Activated CD4-positive, alpha-beta memory T cell treated with anti-CD3 and anti-CD28 coated beads, Interleukin-2, amount 10 ng/mL, durations not matched to agents 7 days and 5 days (primary cell): ENCODE measurements at regions of chr11 and their contacts with region 1.

Region 1: GRCh38 chr11:123407130-123407995 is 22.7 kb upstream of the GRAMD1B start:
- DNase-seq: peak; percentile 73
- H3K4me3 Mint-ChIP-seq: peak overlapping the region; percentile 70
- H3K27ac Mint-ChIP-seq: no peak overlapping the region
- H3K4me1 Mint-ChIP-seq: peaks cover 45% of the 10 kb centered on the region
- H3K27me3 Mint-ChIP-seq: no peaks in the 10 kb centered on the region

Region 2: DNA sequence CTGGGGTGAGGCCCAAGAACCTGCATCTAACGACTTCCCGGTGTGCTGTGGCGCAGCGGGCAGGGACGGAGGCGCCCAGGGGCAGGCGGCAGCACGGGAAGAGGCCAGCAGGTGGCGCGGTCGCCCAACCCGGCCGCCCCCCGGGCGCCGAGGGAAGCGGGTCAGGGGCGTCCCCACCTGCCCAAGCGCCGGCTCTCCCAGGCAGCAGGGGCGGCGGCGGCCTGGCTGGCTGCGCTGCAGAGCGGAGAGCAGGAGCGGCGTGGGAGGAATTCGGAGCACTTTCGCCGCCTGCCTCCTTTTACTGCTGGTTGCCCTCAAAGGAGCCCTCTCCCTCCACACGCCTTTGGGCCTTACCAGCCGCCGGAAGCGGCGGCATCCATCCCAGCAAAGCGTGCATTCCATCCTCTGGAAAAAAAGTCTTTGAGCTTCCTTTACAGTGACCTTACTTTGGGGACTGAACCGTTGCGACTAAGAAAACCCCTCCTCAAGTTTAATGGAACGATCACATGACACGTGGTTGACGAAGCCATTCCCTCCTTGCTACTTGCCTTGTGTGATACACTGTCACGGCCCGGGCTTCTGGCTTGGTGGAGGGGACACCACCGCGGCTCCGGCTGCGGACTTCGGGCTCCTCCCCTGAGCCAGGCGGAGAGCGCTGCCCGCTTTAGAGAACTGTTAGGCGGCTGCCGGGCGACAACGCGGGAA is 105.5 kb before region 1 on chr11:
- CTCF ChIA-PET with region 1: interaction called, 42 read pairs
- POLR2A ChIA-PET with region 1: interaction called, 3 read pairs
- DNase-seq: peak; percentile 78
- H3K4me3 Mint-ChIP-seq: peak overlapping the region; percentile 56
- H3K27ac Mint-ChIP-seq: peak overlapping the region; percentile 59
- H3K4me1 Mint-ChIP-seq: peaks cover 47% of the 10 kb centered on the region
- H3K27me3 Mint-ChIP-seq: peaks cover 3% of the 10 kb centered on the region

Region 3: DNA sequence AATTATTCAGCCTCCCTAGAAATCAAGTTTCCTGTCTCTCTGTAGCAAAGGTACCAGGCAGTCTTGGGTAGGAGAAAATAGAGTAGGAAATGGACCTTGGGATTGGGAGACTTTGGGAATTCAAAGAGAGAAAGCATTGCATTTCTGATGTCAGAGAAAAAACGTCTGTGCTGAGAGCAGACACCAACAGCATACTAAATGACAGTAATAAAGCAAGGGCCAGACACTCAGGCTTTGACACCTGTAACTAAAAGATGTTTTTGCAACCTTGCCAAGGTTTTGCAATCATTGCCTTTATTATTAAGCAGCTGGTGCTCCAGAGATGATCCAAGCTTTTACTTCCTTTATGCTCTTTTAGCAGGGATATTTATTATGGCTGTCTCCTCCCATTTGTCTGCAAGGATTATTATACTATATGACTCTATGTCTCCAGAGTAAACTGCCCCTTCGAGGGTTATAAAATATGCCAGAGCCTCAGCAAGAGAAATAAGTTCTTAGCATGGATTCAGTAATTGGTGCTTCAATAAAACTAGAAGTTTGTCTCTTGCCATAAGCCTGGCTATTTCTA is 62.5 kb before region 1 on chr11:
- CTCF ChIA-PET with region 1: no interaction called
- POLR2A ChIA-PET with region 1: no interaction called
- DNase-seq: no peak
- H3K4me3 Mint-ChIP-seq: no peak overlapping the region
- H3K27ac Mint-ChIP-seq: no peak overlapping the region
- H3K4me1 Mint-ChIP-seq: no peaks in the 10 kb centered on the region
- H3K27me3 Mint-ChIP-seq: peaks cover 7% of the 10 kb centered on the region

Region 4: DNA sequence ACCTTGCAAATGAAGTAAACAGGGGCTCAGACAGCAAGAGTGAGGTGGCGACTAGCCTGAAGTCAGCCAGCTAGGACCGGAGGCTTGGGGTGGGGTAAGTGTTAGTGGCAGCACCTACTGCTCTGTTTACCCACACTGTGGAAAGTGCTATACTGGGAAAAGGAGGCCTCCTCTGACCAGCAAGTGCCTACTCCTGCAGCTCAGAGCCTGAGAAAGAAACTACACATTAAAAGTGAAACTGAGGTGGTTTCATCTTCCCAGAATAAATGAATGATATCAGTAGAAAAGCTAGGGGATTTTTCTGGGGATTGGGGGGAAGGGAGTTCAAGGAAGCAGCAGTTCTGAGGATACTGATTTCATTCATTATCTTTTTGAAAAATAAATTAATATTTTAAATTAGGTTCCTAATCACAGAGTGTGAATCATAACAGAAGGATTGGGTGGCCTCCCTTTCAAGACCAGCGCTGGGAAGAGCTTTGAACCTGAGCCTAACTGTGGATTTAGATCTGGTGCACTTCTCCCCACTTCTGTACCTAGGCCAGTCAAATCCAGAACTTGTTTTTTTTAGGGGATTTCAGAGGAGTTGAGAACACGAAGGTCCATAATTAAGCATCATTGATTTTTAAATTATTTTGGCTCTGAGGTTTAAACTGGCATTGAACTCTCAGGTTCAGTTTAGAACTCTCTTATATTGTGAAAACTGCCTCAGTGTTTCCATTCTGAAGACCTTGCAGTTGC is 25.4 kb before region 1 on chr11:
- CTCF ChIA-PET with region 1: interaction called, 21 read pairs
- POLR2A ChIA-PET with region 1: interaction called, 18 read pairs
- DNase-seq: peak; percentile 78
- H3K4me3 Mint-ChIP-seq: peak overlapping the region; percentile 49
- H3K27ac Mint-ChIP-seq: no peak overlapping the region
- H3K4me1 Mint-ChIP-seq: peaks cover 43% of the 10 kb centered on the region
- H3K27me3 Mint-ChIP-seq: no peaks in the 10 kb centered on the region

Region 5: DNA sequence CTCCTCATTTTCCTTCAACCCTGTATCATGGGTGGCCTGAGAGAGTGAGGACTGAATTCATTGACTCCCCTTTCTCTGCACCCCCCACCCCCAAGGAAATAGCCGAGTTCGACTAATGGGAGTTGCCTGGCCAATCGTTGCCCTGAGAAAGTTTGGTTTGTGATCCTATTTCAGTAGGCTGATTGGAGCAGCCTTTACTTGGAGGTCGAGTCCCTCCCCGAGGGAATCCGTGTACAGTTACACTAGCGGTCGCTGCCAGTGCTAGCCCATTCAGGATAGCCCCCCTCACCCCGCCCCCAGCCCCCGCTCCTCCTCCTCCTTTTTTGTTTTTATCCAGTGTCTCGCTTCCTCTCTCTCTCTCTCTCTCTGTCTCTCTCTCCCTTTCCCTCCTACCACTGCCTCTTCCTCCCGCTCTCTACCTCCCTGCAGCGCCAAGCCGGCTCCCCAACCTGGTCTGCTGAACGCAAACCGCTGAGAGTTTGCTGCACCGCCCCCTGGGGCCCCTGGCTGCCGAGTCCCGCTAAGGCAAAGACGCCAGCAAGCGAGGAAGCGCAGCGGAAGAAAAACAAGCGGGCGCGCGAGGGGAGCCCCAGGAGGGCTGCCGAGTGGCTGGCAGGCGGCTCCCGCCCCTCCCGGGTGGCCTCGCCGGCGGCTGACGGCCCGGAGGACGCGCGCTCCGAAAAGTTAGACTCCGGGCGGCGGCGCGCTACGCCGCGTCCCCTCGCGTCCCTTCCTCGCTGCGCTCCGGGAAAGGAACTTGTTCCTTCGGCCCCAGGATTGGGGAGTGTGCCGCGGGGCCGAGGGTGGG is 22.8 kb after region 1 on chr11 and contains the start of gene GRAMD1B:
- CTCF ChIA-PET with region 1: interaction called, 60 read pairs
- POLR2A ChIA-PET with region 1: interaction called, 5 read pairs
- DNase-seq: peak; percentile 88
- H3K4me3 Mint-ChIP-seq: peak within 1 kb of the TSS; percentile 98
- H3K27ac Mint-ChIP-seq: peak within 1 kb of the TSS; percentile 94
- H3K4me1 Mint-ChIP-seq: peaks cover 52% of the 10 kb centered on the region
- H3K27me3 Mint-ChIP-seq: no peaks in the 10 kb centered on the region
- total RNA-seq, gene GRAMD1B: 91.6 to 91.8 TPM

Region 6: GRCh38 chr11:123443851-123444598 is 36.7 kb after region 1 on chr11:
- CTCF ChIA-PET with region 1: interaction called, 23 read pairs
- POLR2A ChIA-PET with region 1: interaction called, 9 read pairs
- DNase-seq: no peak
- H3K4me3 Mint-ChIP-seq: no peak overlapping the region
- H3K27ac Mint-ChIP-seq: peak overlapping the region; percentile 56
- H3K4me1 Mint-ChIP-seq: peaks cover 91% of the 10 kb centered on the region
- H3K27me3 Mint-ChIP-seq: no peaks in the 10 kb centered on the region

Region 7: GRCh38 chr11:123478352-123478987 is 71.1 kb after region 1 on chr11:
- CTCF ChIA-PET with region 1: interaction called, 256 read pairs
- POLR2A ChIA-PET with region 1: interaction called, 28 read pairs
- DNase-seq: peak; percentile 39
- H3K4me3 Mint-ChIP-seq: peak overlapping the region; percentile 29
- H3K27ac Mint-ChIP-seq: peak overlapping the region; percentile 69
- H3K4me1 Mint-ChIP-seq: peaks cover 67% of the 10 kb centered on the region
- H3K27me3 Mint-ChIP-seq: no peaks in the 10 kb centered on the region

Region 8: DNA sequence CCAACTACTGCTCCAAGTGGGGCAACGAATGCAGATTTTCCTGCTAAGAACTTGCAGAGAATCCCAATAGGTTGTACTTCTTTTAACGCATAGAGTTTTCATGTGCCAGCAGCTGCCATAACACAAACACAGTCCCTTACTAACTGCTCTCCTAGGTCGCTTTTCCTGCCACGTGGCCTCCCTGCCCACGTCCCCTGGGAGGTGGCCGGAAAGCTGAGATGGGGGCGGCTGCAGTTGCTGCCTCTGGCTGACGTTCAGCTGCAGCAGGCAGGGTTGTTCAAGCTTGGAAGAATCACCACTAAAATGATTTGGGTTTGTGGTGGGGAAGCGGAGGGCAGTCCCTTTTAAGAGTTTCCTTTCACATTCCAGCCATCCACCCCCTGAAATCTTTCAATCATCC is 294.8 kb after region 1 on chr11:
- CTCF ChIA-PET with region 1: no interaction called
- POLR2A ChIA-PET with region 1: no interaction called
- DNase-seq: no peak
- H3K4me3 Mint-ChIP-seq: no peak overlapping the region
- H3K27ac Mint-ChIP-seq: no peak overlapping the region
- H3K4me1 Mint-ChIP-seq: no peaks in the 10 kb centered on the region
- H3K27me3 Mint-ChIP-seq: peaks cover 23% of the 10 kb centered on the region